Right ventricle myocardium inferior (tissue), 1 donor: ENCODE measurements at regions of chr5 and their contacts with region 1.

Region 1: GRCh38 chr5:66144074-66144833 is at the start of gene SREK1:
- DNase-seq: peak; percentile 95
- ATAC-seq: peak; percentile 96
- total RNA-seq, gene SREK1: 27.5 TPM

Region 2: GRCh38 chr5:65760504-65761275 is 383.6 kb before region 1 on chr5:
- intact Hi-C with region 1: loop called (anchors 10 kb)
- DNase-seq: no peak
- ATAC-seq: peak; percentile 79

Region 3: DNA sequence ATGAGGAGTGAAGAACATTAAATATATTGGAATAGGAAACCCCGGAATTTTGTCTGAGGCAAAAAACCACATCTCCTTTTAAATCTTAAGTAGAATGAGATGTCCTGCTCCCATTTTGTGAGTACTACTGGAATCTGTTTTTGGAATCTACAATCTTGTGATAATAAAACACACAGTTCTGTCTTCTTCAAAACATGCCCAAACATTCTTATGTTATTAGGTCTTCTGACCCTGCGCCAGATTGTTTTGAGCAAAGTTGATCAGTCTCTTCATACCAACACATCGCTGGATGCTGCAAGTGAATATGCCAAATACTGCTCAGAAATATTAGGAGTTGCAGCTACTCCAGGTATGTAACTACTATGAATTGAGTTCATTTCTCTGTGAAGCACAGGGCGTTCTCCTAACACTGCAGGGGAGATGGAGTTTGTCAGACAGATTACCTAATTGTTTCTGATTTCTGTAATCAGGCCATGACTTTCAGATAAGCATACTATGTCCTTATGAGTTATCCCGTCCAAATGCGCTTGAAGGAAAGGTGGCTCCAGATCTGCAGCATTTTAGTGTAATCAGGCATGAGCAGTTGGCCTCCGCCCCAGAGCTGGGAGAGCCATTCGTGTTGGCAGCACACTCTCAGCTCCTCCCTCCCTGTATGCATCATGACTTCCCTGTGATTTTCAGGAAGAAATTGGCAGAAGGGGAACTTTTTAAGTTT is 334.3 kb before region 1 on chr5:
- intact Hi-C with region 1: no loop called
- DNase-seq: no peak
- ATAC-seq: peak; percentile 92

Region 4: GRCh38 chr5:65925601-65926275 is 218.5 kb before region 1 on chr5:
- intact Hi-C with region 1: loop called (anchors 2 kb)
- DNase-seq: peak; percentile 93
- ATAC-seq: peak; percentile 93